ENCODE measurements at regions of chr5 and their contacts with region 1.

Region 1: GRCh38 chr5:80686757-80687156 is 32.0 kb upstream of the DHFR start:
- DNase-seq: no peak
- ATAC-seq: no peak
- H3K4me3 ChIP-seq: no peak overlapping the region
- H3K27ac ChIP-seq: no peak overlapping the region
- H3K4me1 ChIP-seq: no peaks in the 10 kb centered on the region
- H3K27me3 ChIP-seq: no peaks in the 10 kb centered on the region
- CTCF ChIP-seq: no peak; the same call in 1 of the 2 replicates

Region 2: DNA sequence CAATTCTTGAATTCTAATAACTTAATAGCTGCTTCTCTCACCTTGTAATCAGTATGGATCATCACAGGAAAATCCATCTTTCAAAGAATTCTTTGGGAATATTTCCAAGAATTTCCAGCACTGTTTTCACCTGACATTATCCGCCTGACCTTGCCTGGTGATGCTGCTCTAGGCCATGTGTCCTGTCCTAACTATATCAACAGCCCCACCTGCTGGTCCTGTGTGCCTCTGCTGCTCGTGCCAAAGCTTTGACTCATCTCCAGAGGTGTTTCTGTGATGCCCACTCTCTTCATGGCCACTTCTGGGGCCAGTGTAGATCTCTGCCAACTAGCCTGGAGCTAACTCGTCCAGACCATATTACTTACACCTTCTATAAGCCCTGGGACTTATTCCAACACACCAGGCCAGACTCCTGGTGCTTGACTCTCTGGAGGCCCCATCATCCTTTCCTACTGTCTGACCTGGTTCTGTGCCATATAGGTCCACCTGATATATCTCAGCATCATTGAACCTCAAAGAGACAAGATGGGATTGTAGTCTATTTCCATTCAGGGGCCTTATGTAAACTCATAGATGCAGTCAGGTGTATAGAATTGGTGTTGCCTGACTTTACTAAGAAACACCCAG is 478.8 kb after region 1 on chr5:
- CTCF ChIA-PET with region 1: no interaction called
- POLR2A ChIA-PET with region 1: no interaction called
- in situ Hi-C with region 1: no loop called
- intact Hi-C with region 1: loop called (anchors 10 kb)
- DNase-seq: peak; percentile 67
- ATAC-seq: peak; percentile 93
- H3K4me3 ChIP-seq: no peak overlapping the region
- H3K27ac ChIP-seq: no peak overlapping the region
- H3K4me1 ChIP-seq: no peaks in the 10 kb centered on the region
- H3K27me3 ChIP-seq: no peaks in the 10 kb centered on the region
- CTCF ChIP-seq: peak; percentile 89